ENCODE measurements at regions of chr16 and their contacts with region 1.

Region 1: DNA sequence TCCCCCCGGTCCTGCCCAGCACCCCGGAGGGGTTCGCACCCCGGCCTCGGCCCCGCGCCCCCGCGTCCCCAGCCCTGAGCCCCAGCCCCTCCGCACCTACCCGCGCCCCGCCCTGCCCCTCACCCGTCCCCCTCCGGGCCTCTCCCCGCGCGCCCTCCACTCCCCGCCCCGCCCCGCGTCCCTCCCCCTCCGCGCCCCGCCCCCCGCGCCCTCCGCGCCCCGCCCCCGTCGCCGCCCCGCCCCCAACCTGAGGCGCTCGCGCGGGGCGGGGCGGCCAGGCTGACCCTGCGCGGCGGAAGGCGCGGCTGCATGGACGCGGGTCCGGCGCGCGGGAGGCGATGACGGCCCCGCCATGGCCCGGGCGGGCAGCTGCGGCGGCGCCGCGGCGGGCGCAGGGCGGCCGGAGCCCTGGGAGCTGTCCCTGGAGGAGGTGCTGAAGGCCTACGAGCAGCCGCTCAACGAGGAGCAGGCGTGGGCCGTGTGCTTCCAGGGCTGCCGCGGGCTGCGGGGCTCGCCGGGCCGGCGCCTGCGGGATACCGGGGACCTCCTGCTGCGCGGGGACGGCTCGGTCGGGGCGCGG is at the start of gene SPIRE2:
- DNase-seq: peak; percentile 40 to 78
- H3K4me3 ChIP-seq: peak within 1 kb of the TSS; percentile 77
- H3K27ac ChIP-seq: no peak within 1 kb of the TSS
- H3K4me1 ChIP-seq: peaks cover 26% of the 10 kb centered on the region
- H3K27me3 ChIP-seq: no peaks in the 10 kb centered on the region
- CTCF ChIP-seq: no peak
- total RNA-seq, gene SPIRE2: 34.5 and 48.6 TPM in 2 replicates

Region 2: GRCh38 chr16:89711601-89712273 is 116.6 kb before region 1 on chr16:
- CTCF ChIA-PET with region 1: no interaction called
- POLR2A ChIA-PET with region 1: no interaction called
- intact Hi-C with region 1: no loop called
- DNase-seq: peak; percentile 44 to 72
- H3K4me3 ChIP-seq: peak overlapping the region; percentile 98
- H3K27ac ChIP-seq: no peak overlapping the region
- H3K4me1 ChIP-seq: peaks cover 4% of the 10 kb centered on the region; the same call in 1 of the 2 replicates
- H3K27me3 ChIP-seq: no peaks in the 10 kb centered on the region
- CTCF ChIP-seq: no peak

Region 3: DNA sequence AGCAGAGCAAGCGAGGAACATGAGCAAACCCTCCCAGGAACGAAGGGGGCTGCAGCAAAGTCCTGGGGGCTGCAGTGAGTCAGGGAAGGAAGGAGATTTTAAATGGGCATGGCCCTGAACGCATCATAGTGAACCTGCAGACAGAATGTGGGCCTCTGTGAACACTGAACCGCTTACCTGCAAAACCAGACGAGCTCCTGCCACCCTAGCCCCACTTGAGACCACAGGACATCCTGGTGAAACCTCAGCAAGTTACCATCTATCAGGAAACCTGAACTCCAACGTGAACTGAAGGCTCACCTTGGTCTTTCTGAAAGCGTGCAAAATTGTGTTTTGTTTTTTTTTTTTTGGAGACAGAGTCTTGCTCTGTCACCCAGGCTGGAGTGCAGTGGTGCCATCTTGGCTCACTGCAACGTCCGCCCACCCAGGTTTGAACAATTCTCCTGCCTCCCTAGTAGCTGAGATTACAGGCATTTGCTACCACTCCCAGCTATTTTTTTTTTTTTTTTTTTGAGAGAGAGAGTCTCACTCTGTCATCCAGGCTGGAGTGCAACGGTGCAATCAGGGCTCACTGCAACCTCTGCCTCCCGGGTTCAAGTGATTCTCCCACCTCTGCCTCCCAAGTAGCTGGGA is 42.6 kb before region 1 on chr16:
- CTCF ChIA-PET with region 1: no interaction called
- POLR2A ChIA-PET with region 1: interaction called, 12 read pairs
- intact Hi-C with region 1: no loop called
- DNase-seq: no peak
- H3K4me3 ChIP-seq: no peak overlapping the region
- H3K27ac ChIP-seq: no peak overlapping the region
- H3K4me1 ChIP-seq: no peaks in the 10 kb centered on the region
- H3K27me3 ChIP-seq: no peaks in the 10 kb centered on the region
- CTCF ChIP-seq: no peak

Region 4: GRCh38 chr16:89842471-89843408 is 14.5 kb after region 1 on chr16:
- CTCF ChIA-PET with region 1: interaction called, 6 read pairs
- POLR2A ChIA-PET with region 1: interaction called, 11 read pairs
- intact Hi-C with region 1: no loop called
- DNase-seq: peak in 1 of 2 experiments; percentile 63
- H3K4me3 ChIP-seq: no peak overlapping the region
- H3K27ac ChIP-seq: no peak overlapping the region
- H3K4me1 ChIP-seq: peaks cover 11% of the 10 kb centered on the region
- H3K27me3 ChIP-seq: no peaks in the 10 kb centered on the region
- CTCF ChIP-seq: no peak

Measured in PC-9 (cell line).